ENCODE measurements at regions of chr12 and their contacts with region 1.

Region 1: DNA sequence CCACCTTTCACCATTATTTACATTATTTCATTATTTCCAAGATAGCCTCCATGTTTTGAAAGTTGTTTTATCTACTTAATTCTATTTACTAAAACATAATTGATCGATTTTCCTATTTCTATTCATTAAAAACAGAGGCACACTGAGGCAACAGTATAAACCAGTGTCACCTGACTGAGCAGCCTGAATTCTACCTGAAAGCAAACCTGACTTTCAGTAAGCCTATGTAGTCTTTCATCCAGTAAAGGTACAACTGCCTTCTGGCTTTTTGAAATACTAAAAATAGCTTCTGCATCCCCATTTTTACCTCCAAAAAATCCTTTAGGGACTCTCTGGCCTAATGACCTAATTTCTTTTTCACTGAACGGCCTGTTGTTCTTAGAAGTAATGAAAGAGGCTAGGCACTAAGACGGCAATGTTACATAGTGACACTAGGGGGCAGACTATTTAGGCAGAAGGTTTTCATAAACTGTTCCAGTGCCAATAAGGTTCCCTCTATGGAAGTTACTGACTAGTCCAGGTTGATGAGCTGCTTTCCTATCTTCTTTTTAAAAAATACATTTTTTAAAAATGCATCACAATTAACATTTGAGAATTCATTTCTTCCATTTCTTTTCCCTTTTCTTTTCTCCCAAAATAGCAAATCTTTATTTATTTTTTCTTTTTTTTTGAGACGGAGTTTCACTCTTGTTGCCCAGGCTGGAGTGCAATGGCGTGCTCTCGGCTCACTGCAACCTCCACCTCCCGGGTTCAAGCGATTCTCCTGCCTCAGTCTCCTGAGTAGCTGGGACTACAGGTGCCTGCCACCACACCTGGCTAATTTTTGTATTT is 17.5 kb downstream of the ANAPC5 start:
- DNase-seq: peak; percentile 36
- H3K4me3 ChIP-seq: no peak overlapping the region
- H3K27ac ChIP-seq: no peak overlapping the region
- H3K27me3 ChIP-seq: no peaks in the 10 kb centered on the region
- CTCF ChIP-seq: peak; percentile 86

Region 2: GRCh38 chr12:121345151-121345815 is 10.6 kb after region 1 on chr12:
- CTCF ChIA-PET with region 1: interaction called, 53 read pairs
- POLR2A ChIA-PET with region 1: no interaction called
- DNase-seq: no peak
- H3K4me3 ChIP-seq: no peak overlapping the region
- H3K27ac ChIP-seq: no peak overlapping the region
- H3K27me3 ChIP-seq: no peaks in the 10 kb centered on the region
- CTCF ChIP-seq: no peak

Region 3: DNA sequence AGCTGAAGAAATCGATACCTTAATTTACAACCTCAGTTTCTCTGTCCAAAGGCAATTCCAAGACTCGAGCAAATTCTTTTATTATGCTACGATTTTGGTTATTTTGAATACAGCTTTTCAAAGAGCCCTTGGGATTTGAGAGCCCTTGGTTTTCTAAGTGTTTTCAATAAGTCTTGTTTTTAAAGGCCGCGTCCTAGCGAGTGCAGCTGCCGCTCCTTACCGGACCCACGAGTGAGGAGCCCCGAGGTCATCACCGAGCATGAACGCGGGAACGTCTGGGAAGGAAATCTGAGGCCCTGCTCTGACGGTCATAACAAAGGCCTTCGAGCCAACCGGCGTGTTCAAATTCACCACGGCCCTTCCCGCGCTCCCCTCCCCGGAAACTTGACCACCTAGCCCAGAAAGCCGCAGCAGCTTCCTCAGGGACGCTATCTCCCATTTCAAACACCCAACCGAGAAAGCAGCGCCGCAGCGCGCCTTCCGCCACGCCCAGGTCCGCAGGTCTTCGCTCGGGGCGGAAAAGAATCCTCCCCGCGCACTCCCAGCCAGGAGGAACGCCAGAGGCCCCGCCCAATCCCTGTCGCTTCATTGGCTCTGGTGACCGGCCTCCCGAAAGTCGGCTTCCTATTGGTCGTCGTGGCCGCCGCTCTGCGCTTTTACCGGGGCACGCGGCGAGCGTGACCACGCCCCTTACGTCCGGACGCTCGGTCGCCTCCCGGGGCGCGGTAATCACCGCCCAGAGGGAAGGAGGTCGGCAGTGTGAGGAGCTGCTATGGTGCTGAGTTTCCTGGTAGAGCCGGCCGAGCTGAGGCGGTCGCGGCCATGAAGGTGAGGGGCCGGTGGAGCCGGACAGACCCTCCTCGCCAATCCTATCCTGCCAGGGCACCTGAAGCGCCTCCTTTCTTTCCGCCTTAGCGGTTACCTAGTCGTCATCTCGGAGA is 64.9 kb after region 1 on chr12 and contains the start of gene RNF34:
- CTCF ChIA-PET with region 1: interaction called, 18 read pairs
- POLR2A ChIA-PET with region 1: no interaction called
- DNase-seq: peak; percentile 94
- H3K4me3 ChIP-seq: peak within 1 kb of the TSS; percentile 86
- H3K27ac ChIP-seq: peak within 1 kb of the TSS; percentile 85
- H3K27me3 ChIP-seq: no peaks in the 10 kb centered on the region
- CTCF ChIP-seq: no peak
- polyA plus RNA-seq, gene RNF34: 47.4 and 55.3 TPM in 2 replicates

Region 4: GRCh38 chr12:121423682-121424623 is 89.2 kb after region 1 on chr12:
- CTCF ChIA-PET with region 1: interaction called, 14 read pairs
- POLR2A ChIA-PET with region 1: no interaction called
- DNase-seq: no peak
- H3K4me3 ChIP-seq: no peak overlapping the region
- H3K27ac ChIP-seq: no peak overlapping the region
- H3K27me3 ChIP-seq: no peaks in the 10 kb centered on the region
- CTCF ChIP-seq: no peak

Region 5: DNA sequence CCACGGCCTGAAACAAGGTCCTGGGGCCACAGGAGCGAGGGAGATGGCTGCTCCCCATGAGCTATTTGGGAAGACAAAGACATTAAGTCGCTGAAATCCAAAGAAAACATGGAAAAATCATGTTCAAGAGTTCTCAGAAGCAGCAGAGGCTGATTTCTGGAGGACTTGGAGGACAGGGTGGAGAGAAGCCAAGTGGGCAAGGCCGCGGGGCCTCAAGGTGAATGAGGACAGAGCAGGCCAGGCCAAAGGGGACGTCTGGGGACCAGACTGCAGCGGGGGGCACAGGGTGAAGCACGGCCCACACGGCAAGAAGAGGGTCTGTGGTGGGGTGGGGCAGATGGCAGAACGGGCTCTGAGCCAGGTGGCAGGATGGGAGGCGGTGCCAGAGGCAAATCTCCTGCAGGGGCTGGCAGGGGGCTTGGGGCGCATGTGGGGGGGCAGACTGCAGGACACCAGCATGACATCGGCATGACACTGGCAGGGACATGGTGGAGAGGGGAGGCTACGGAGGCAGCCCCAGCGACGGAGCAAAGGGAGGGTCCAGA is 114.1 kb after region 1 on chr12:
- CTCF ChIA-PET with region 1: interaction called, 135 read pairs
- POLR2A ChIA-PET with region 1: no interaction called
- DNase-seq: no peak
- H3K4me3 ChIP-seq: no peak overlapping the region
- H3K27ac ChIP-seq: no peak overlapping the region
- H3K27me3 ChIP-seq: no peaks in the 10 kb centered on the region
- CTCF ChIP-seq: no peak

Region 6: GRCh38 chr12:121467115-121467793 is 132.5 kb after region 1 on chr12:
- CTCF ChIA-PET with region 1: no interaction called
- POLR2A ChIA-PET with region 1: no interaction called
- DNase-seq: peak; percentile 18
- H3K4me3 ChIP-seq: peak overlapping the region; percentile 70
- H3K27ac ChIP-seq: no peak overlapping the region
- H3K27me3 ChIP-seq: no peaks in the 10 kb centered on the region
- CTCF ChIP-seq: no peak